ENCODE measurements at regions of chr1 and their contacts with region 1.

Region 1: GRCh38 chr1:242100921-242101320 is 102.0 kb upstream of the MAP1LC3C start:
- DNase-seq: no peak
- ATAC-seq: no peak
- H3K4me3 ChIP-seq: no peak overlapping the region
- H3K27ac ChIP-seq: no peak overlapping the region
- H3K4me1 ChIP-seq: no peaks in the 10 kb centered on the region
- H3K27me3 ChIP-seq: no peaks in the 10 kb centered on the region
- CTCF ChIP-seq: no peak
- POLR2A ChIP-seq: no peak
- RAD21 ChIP-seq: no peak

Region 2: DNA sequence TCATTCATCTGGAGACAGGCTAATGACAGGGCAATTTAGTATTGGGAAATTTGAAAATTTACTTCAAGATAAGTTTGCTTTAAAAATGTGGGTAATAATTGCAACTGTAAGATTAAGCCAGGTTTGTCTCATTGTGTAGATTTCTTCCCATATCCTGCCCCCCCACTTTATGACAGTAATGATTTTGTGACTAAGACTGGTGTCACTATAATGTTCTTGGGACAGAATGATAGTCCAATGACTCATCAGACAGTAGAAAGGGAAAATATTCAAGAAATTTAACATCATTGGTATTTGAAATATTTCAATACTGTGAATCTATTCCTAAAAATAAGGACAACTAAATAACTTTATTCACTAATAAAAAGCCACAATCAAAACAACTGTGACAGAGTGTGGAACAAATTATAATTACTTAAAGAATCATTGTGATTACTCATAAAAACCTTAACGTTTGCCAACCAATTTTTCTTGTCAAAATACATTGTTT is 618.1 kb before region 1 on chr1:
- CTCF ChIA-PET with region 1: no interaction called
- POLR2A ChIA-PET with region 1: no interaction called
- dilution Hi-C with region 1: no loop called
- in situ Hi-C with region 1: no loop called
- intact Hi-C with region 1: no loop called
- DNase-seq: peak; percentile 75
- ATAC-seq: peak; percentile 53
- H3K4me3 ChIP-seq: no peak overlapping the region
- H3K27ac ChIP-seq: no peak overlapping the region
- H3K4me1 ChIP-seq: peaks cover 6% of the 10 kb centered on the region
- H3K27me3 ChIP-seq: no peaks in the 10 kb centered on the region
- CTCF ChIP-seq: no peak
- POLR2A ChIP-seq: no peak
- RAD21 ChIP-seq: no peak

Region 3: DNA sequence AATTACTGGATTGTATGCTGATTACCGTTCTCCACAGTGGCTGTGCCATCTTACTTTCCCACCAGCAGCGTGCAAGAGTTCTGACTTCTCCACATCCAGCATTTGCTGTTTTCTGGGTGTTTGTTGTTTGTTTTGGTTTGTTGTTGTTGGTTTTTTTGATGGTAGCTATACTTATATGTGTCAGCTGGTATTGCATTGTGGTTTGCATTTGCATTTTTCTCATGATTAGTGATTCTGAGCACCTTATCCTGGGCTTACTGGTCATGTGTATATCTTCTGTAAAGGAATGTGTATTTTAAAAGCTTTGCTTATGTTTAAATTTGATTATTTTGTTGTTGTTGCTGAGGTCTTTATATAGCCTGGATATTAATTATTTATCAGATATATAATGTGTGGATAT is 35.1 kb before region 1 on chr1:
- CTCF ChIA-PET with region 1: no interaction called
- POLR2A ChIA-PET with region 1: no interaction called
- dilution Hi-C with region 1: no loop called
- in situ Hi-C with region 1: no loop called
- intact Hi-C with region 1: loop called (anchors 2 kb)
- DNase-seq: no peak
- ATAC-seq: no peak
- H3K4me3 ChIP-seq: no peak overlapping the region
- H3K27ac ChIP-seq: no peak overlapping the region
- H3K4me1 ChIP-seq: no peaks in the 10 kb centered on the region
- H3K27me3 ChIP-seq: no peaks in the 10 kb centered on the region
- CTCF ChIP-seq: no peak
- POLR2A ChIP-seq: no peak
- RAD21 ChIP-seq: no peak

Measured in IMR-90 (cell line).